Ovary (tissue), 10 donors: ENCODE measurements at regions of chr14 and their contacts with region 1.

Region 1: GRCh38 chr14:77028384-77029231 is at the start of gene IRF2BPL:
- DNase-seq: peak; percentile 99 to 100 (median 100)
- H3K4me3 ChIP-seq: peak within 1 kb of the TSS; percentile 85
- H3K27ac ChIP-seq: peak within 1 kb of the TSS; percentile 80 to 100
- H3K4me1 ChIP-seq: peaks cover 13% of the 10 kb centered on the region
- H3K27me3 ChIP-seq: no peaks in the 10 kb centered on the region
- CTCF ChIP-seq: peak in 1 of 3 donors; percentile 21
- EP300 ChIP-seq: peak; percentile 92
- POLR2A ChIP-seq: peak; percentile 96
- total RNA-seq, gene IRF2BPL: 52.2 to 126 (median 78.4) TPM

Region 2: DNA sequence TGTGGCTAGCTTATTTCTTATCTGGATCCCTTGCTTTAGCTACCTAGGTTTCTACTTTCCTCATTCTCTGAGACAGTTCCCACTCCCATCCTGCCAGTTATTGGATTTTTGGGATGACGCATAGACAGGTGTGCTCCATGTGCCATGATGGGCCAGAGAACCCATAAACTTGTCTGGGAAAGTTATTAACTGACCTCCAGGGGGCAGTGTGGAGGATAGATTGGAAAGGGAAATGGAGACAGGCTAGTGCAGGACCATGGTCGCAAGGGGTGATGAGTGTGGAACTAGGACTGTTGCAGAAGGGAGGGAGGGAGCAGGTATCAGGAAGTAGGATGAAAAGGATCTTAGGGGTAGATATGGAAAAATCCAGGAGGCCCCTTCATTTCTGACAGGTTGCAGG is 572.4 kb before region 1 on chr14:
- intact Hi-C with region 1: no loop called
- DNase-seq: no peak
- H3K4me3 ChIP-seq: no peak overlapping the region
- H3K27ac ChIP-seq: no peak overlapping the region
- H3K4me1 ChIP-seq: no peaks in the 10 kb centered on the region
- H3K27me3 ChIP-seq: no peaks in the 10 kb centered on the region
- CTCF ChIP-seq: no peak
- EP300 ChIP-seq: no peak
- POLR2A ChIP-seq: no peak

Region 3: DNA sequence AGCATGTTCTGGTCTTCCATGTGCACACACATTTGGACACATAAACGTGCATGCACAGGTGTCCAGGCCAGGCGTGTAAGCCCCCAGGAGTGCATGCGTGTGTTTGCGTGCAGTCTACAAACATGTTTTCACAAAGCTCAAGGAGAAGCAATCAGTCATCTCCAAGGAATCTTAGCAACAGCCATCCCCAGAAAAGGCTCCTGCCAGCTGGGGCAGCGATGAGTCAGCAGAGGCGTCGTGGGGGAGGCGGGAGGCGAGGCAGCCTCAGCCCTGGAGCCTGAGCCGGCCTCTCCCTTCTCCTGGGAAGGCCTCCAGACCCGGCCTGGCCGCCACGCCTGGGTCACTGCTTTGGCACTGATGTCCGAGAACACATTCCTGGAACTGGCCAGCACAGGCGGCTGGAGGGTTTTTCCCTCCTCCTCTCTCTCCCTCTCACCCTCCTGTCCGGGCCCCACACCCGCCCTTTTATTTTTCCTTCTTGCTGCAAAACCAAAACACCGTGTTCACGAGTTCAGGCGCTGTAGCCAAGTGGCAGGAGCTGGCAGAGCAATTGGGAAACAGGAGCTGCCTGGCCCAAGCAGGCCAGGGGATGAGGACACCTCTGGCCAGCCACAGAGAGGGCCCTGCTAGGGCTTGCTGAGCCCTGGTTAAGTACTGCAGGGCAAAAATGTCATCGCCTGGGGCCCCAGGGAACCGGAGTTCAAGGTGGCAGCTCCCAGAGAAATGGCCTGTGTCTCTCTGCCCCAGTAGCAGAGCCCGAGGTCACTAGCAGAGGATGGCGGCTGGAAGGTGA is 109.7 kb before region 1 on chr14:
- intact Hi-C with region 1: loop called in 3 of 4 experiments (anchors 5 to 10 kb)
- DNase-seq: peak; percentile 97 to 98 (median 98)
- H3K4me3 ChIP-seq: no peak overlapping the region
- H3K27ac ChIP-seq: peak overlapping the region in 1 of 2 donors; percentile 86
- H3K4me1 ChIP-seq: peaks cover 42% of the 10 kb centered on the region
- H3K27me3 ChIP-seq: no peaks in the 10 kb centered on the region
- CTCF ChIP-seq: peak in 1 of 3 donors; percentile 32
- EP300 ChIP-seq: peak; percentile 83
- POLR2A ChIP-seq: no peak

Region 4: DNA sequence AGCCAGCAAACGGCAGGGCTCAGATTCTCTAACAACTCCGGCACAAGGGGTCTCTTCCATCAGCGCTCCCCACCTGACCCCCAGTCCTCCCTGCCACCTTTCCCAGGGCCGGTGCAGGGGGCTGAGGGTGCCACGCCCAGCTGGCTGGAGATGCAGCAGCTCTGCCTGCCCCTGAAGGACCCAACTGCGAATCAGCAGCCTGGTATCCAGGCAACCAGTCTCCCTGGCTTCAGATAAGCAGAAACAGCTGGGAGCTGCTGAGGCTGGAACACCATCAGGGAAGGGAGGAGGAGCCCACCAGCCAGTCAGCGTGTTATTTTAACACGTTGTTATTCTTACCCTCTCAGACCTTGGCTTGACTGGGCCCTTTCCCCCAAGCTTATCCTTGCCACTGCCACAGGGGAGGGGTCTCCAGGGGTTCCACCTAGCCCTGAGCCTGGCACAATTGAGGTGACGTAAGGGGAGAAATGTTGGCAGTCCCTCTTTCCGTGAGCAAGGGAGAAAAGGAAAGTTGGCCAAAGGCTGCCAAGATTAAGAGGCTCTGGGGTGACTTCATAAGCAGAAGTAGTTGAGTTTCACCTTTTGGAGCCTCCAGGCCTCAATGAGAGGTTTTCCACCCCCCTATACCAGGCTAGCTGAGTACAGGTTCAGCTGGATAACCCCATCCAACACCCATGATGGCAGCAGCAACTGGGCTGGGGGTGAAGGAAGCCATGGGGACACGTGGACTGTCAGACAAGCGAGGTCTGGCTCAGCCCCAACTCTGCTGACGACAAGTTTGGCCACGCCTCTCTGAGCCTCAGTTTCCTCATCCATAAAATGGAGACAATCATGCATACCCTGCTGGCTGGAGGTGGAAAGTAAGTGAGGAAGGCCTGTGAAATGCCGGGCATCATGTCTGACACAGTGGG is 91.2 kb before region 1 on chr14:
- intact Hi-C with region 1: loop called in 1 of 4 experiments (anchors 5 kb)
- DNase-seq: peak; percentile 81 to 85 (median 83)
- H3K4me3 ChIP-seq: no peak overlapping the region
- H3K27ac ChIP-seq: peak overlapping the region; percentile 8 to 76
- H3K4me1 ChIP-seq: peaks cover 29% of the 10 kb centered on the region
- H3K27me3 ChIP-seq: no peaks in the 10 kb centered on the region
- CTCF ChIP-seq: no peak
- EP300 ChIP-seq: no peak
- POLR2A ChIP-seq: no peak

Region 5: GRCh38 chr14:76956316-76957090 is 72.1 kb before region 1 on chr14:
- intact Hi-C with region 1: loop called (anchors 2 to 5 kb)
- DNase-seq: peak; percentile 82 to 91 (median 90)
- H3K4me3 ChIP-seq: peak overlapping the region; percentile 29
- H3K27ac ChIP-seq: peak overlapping the region; percentile 88 to 95
- H3K4me1 ChIP-seq: peaks cover 9% of the 10 kb centered on the region
- H3K27me3 ChIP-seq: no peaks in the 10 kb centered on the region
- CTCF ChIP-seq: peak in 1 of 3 donors; percentile 41
- EP300 ChIP-seq: no peak
- POLR2A ChIP-seq: no peak

Region 6: GRCh38 chr14:77040059-77040740 is 11.6 kb after region 1 on chr14:
- intact Hi-C with region 1: loop called in 1 of 4 experiments (anchors 2 kb)
- DNase-seq: peak; percentile 99 to 100 (median 100)
- H3K4me3 ChIP-seq: peak overlapping the region; percentile 23
- H3K27ac ChIP-seq: peak overlapping the region; percentile 60 to 94
- H3K4me1 ChIP-seq: peaks cover 35% of the 10 kb centered on the region
- H3K27me3 ChIP-seq: no peaks in the 10 kb centered on the region
- CTCF ChIP-seq: no peak
- EP300 ChIP-seq: peak; percentile 89
- POLR2A ChIP-seq: peak; percentile 16

Region 7: GRCh38 chr14:77097700-77098528 is 69.3 kb after region 1 on chr14 and contains the start of gene CIPC:
- intact Hi-C with region 1: loop called in 1 of 4 experiments (anchors 2 kb)
- DNase-seq: peak; percentile 99 to 100 (median 99)
- H3K4me3 ChIP-seq: peak within 1 kb of the TSS; percentile 94
- H3K27ac ChIP-seq: peak within 1 kb of the TSS; percentile 81 to 91
- H3K4me1 ChIP-seq: peaks cover 7% of the 10 kb centered on the region
- H3K27me3 ChIP-seq: no peaks in the 10 kb centered on the region
- CTCF ChIP-seq: peak in 1 of 3 donors; percentile 19
- EP300 ChIP-seq: peak; percentile 33
- POLR2A ChIP-seq: peak; percentile 76
- total RNA-seq, gene CIPC: 13.7 to 32.4 (median 22.2) TPM

Region 8: GRCh38 chr14:77301103-77301502 is 272.5 kb after region 1 on chr14:
- intact Hi-C with region 1: no loop called
- DNase-seq: peak; percentile 77 to 86 (median 79)
- H3K4me3 ChIP-seq: no peak overlapping the region
- H3K27ac ChIP-seq: no peak overlapping the region
- H3K4me1 ChIP-seq: peaks cover 5% of the 10 kb centered on the region
- H3K27me3 ChIP-seq: no peaks in the 10 kb centered on the region
- CTCF ChIP-seq: peak; percentile 52 to 60 (median 53)
- EP300 ChIP-seq: no peak
- POLR2A ChIP-seq: no peak